PC-9 (cell line): ENCODE measurements at regions of chr10 and their contacts with region 1.

Region 1: DNA sequence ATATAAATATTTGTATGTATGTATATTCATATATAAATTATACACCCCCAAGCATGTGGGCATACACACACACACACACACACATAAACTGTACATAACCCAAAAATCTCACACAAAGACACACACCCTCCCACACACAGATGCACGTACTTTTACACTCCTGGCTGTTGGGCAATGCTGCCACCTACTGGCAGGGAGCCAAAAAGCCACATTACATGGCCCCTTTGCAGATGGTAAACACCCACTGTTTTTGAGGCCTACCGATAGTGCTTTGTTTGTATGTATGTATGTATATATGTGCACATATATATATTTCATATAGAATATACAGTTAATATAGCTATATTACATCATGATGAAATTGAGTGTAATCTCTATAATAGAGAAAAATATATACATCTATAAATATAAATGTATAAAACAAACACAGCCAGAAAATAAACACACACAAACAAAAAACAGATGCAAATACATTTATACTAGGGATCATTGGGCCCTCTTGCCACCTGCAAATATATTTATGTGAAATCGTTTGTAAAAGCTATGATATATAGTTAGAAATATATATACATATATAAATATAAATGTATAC is 120.1 kb upstream of the ACBD5 start:
- DNase-seq: peak in 1 of 2 experiments; percentile 69
- H3K4me3 ChIP-seq: no peak overlapping the region
- H3K27ac ChIP-seq: no peak overlapping the region
- H3K4me1 ChIP-seq: no peaks in the 10 kb centered on the region
- H3K27me3 ChIP-seq: no peaks in the 10 kb centered on the region
- CTCF ChIP-seq: peak; percentile 69

Region 2: GRCh38 chr10:26725837-26726727 is 634.6 kb before region 1 on chr10:
- CTCF ChIA-PET with region 1: no interaction called
- POLR2A ChIA-PET with region 1: no interaction called
- intact Hi-C with region 1: loop called (anchors 5 kb)
- DNase-seq: peak in 1 of 2 experiments; percentile 32
- H3K4me3 ChIP-seq: no peak overlapping the region
- H3K27ac ChIP-seq: no peak overlapping the region
- H3K4me1 ChIP-seq: no peaks in the 10 kb centered on the region
- H3K27me3 ChIP-seq: no peaks in the 10 kb centered on the region
- CTCF ChIP-seq: peak; percentile 83

Region 3: DNA sequence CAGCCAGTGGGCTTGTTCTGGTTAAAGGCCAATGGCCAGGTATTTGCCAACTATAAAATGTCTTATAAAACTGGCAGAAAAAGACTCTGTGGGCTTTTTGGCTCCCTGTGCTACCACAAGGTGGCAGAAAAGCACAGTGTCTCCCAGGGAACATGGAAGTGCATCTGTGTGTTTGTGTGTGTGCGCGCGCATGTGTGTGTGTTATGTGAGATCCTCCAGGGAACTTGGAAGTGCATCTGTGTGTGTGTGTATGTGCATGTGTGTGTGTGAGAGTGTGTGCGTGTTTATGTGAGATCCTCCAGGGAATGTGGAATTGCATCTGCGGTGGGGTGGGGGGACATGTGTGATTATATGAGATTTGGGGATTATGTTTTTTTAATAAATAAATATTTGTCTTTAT is 469.7 kb before region 1 on chr10:
- CTCF ChIA-PET with region 1: no interaction called
- POLR2A ChIA-PET with region 1: no interaction called
- intact Hi-C with region 1: loop called (anchors 1 kb)
- DNase-seq: peak; percentile 41 to 51
- H3K4me3 ChIP-seq: no peak overlapping the region
- H3K27ac ChIP-seq: no peak overlapping the region
- H3K4me1 ChIP-seq: no peaks in the 10 kb centered on the region
- H3K27me3 ChIP-seq: no peaks in the 10 kb centered on the region
- CTCF ChIP-seq: peak; percentile 69

Region 4: DNA sequence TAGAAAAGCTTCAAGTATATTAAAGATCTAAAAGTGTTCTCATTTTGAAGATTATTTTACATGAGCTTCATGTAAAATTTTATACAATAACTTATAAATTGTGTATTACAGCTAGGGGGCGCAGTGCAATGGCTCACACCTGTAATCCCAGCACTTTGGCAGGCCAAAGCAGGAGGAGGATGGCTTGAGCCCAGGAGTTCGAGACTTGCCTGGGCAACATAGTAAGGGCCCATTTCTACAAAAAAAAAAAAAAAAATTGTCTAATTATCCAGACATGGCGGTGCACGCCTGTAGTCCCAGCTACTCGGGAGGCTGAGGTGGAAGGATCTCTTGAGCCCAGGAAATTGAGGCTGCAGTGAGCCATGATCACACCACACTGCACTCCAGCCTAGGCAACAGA is 136.7 kb before region 1 on chr10:
- CTCF ChIA-PET with region 1: no interaction called
- POLR2A ChIA-PET with region 1: no interaction called
- intact Hi-C with region 1: loop called (anchors 2 kb)
- DNase-seq: peak in 1 of 2 experiments; percentile 15
- H3K4me3 ChIP-seq: no peak overlapping the region
- H3K27ac ChIP-seq: no peak overlapping the region
- H3K4me1 ChIP-seq: no peaks in the 10 kb centered on the region
- H3K27me3 ChIP-seq: no peaks in the 10 kb centered on the region
- CTCF ChIP-seq: peak; percentile 78